PC-9 (cell line): ENCODE measurements at regions of chr3 and their contacts with region 1.

Region 1: GRCh38 chr3:23735062-23735461 is 70.7 kb upstream of the UBE2E1 start:
- DNase-seq: peak in 1 of 2 experiments; percentile 67
- H3K4me3 ChIP-seq: peak overlapping the region; percentile 31; the same call in 1 of the 2 replicates
- H3K27ac ChIP-seq: peak overlapping the region; percentile 94
- H3K4me1 ChIP-seq: peaks cover 81% of the 10 kb centered on the region
- H3K27me3 ChIP-seq: no peaks in the 10 kb centered on the region
- CTCF ChIP-seq: no peak

Region 2: GRCh38 chr3:23836536-23837230 is 101.6 kb after region 1 on chr3:
- CTCF ChIA-PET with region 1: no interaction called
- POLR2A ChIA-PET with region 1: interaction called, 12 read pairs
- intact Hi-C with region 1: no loop called
- DNase-seq: no peak
- H3K4me3 ChIP-seq: no peak overlapping the region
- H3K27ac ChIP-seq: peak overlapping the region; percentile 7; the same call in 1 of the 2 replicates
- H3K4me1 ChIP-seq: no peaks in the 10 kb centered on the region
- H3K27me3 ChIP-seq: no peaks in the 10 kb centered on the region
- CTCF ChIP-seq: no peak

Region 3: DNA sequence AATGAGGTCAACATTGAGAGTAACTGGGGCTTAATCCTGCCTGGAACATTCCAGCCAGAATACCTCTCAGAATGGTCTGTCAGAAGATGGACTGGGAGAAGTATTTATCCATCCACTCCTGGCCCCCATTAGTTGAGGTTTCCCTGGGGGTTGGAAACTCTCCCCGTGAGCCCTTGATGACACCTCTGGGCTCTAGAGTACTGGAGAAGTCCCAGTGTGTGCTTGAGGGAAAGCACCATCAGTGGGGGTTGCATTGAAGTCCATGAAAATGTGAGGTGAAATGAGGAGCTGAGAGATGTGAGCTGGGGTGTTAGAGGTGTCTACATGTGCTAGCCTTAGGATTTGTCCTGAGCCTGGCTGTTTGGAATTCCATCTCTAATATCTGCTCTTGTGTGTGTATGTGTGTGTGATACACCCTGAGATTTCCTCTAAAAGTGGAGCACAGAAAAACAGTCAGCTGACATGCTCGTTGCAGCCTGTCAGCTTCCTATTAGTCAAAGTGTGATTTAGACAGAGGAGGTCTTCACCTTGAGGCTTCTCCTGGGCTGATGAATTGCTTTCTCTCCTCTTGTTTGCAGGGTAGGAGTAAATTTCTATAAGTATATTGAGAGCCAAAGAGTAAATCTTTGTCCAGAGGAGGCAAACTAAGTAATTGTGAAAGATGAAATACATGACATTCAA is 277.7 kb after region 1 on chr3:
- CTCF ChIA-PET with region 1: no interaction called
- POLR2A ChIA-PET with region 1: no interaction called
- intact Hi-C with region 1: no loop called
- DNase-seq: no peak
- H3K4me3 ChIP-seq: no peak overlapping the region
- H3K27ac ChIP-seq: no peak overlapping the region
- H3K4me1 ChIP-seq: peaks cover 14% of the 10 kb centered on the region
- H3K27me3 ChIP-seq: no peaks in the 10 kb centered on the region
- CTCF ChIP-seq: no peak